A549 (cell line): ENCODE measurements at regions of chr12 and their contacts with region 1.

Region 1: GRCh38 chr12:46124848-46125619 is 134.7 kb upstream of the SCAF11 start:
- DNase-seq: peak; percentile 59 to 87
- ATAC-seq: peak; percentile 92 to 96
- H3K4me3 ChIP-seq: peak overlapping the region; percentile 7; the same call in 1 of the 3 replicates
- H3K27ac ChIP-seq: peak overlapping the region in 1 of 2 experiments; percentile 17; a peak in 3 of 6 replicates
- H3K4me1 ChIP-seq: peaks cover 14% of the 10 kb centered on the region
- CTCF ChIP-seq: peak; percentile 61
- EP300 ChIP-seq: no peak
- POLR2A ChIP-seq: no peak
- RAD21 ChIP-seq: peak; percentile 76 to 87

Region 2: GRCh38 chr12:45973526-45973925 is 151.5 kb before region 1 on chr12:
- CTCF ChIA-PET with region 1: no interaction called
- POLR2A ChIA-PET with region 1: no interaction called
- DNase-seq: no peak
- ATAC-seq: no peak
- H3K4me3 ChIP-seq: no peak overlapping the region
- H3K27ac ChIP-seq: no peak overlapping the region
- H3K4me1 ChIP-seq: peaks cover 17% of the 10 kb centered on the region
- CTCF ChIP-seq: no peak
- EP300 ChIP-seq: no peak
- POLR2A ChIP-seq: no peak
- RAD21 ChIP-seq: no peak

Region 3: GRCh38 chr12:46071769-46072624 is 53.0 kb before region 1 on chr12:
- CTCF ChIA-PET with region 1: interaction called, 10 read pairs
- POLR2A ChIA-PET with region 1: no interaction called
- DNase-seq: peak; percentile 50 to 68
- ATAC-seq: peak; percentile 90 to 98
- H3K4me3 ChIP-seq: no peak overlapping the region
- H3K27ac ChIP-seq: peak overlapping the region in 1 of 2 experiments; percentile 30; a peak in 1 of 6 replicates
- H3K4me1 ChIP-seq: 0 out of 3 replicates have a peak, but pooled peaks cover 5% of the 10 kb centered on the region
- CTCF ChIP-seq: peak; percentile 94
- EP300 ChIP-seq: no peak
- POLR2A ChIP-seq: no peak
- RAD21 ChIP-seq: peak; percentile 91 to 97

Region 4: GRCh38 chr12:46108721-46109120 is 16.3 kb before region 1 on chr12:
- CTCF ChIA-PET with region 1: interaction called, 13 read pairs
- POLR2A ChIA-PET with region 1: no interaction called
- DNase-seq: no peak
- ATAC-seq: no peak
- H3K4me3 ChIP-seq: no peak overlapping the region
- H3K27ac ChIP-seq: no peak overlapping the region
- H3K4me1 ChIP-seq: no peaks in the 10 kb centered on the region
- CTCF ChIP-seq: no peak
- EP300 ChIP-seq: no peak
- POLR2A ChIP-seq: no peak
- RAD21 ChIP-seq: no peak

Region 5: DNA sequence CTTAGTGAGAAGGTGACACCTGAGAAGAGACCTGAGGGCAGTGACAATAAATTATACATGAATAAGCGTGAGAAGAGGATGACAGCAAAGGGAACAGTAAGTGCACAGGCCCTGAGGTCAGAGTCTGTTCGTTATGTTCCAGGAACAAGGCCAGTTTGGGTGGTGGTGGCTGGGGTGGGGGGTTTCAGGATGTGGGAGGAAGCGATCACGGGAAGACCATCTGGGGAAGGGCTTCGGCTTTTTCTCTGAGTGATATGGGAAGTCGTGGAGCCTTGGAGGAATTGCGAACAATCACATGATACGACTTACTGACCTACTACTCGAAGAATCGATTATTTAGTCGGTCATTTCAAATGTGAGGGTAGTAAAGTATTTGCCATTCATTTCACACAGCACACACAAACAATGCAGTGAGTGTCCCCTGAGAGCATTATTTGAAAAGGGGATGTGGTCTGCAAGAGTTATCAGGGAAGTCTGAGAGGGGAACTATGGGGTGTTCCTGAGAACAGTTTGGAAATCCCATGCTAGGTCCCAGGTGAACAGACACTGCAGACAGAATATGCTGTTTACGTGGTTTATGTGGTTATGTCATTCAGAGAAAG is 49.1 kb after region 1 on chr12:
- CTCF ChIA-PET with region 1: no interaction called
- POLR2A ChIA-PET with region 1: no interaction called
- DNase-seq: no peak
- ATAC-seq: no peak
- H3K4me3 ChIP-seq: no peak overlapping the region
- H3K27ac ChIP-seq: no peak overlapping the region
- H3K4me1 ChIP-seq: no peaks in the 10 kb centered on the region
- CTCF ChIP-seq: no peak
- EP300 ChIP-seq: no peak
- POLR2A ChIP-seq: no peak
- RAD21 ChIP-seq: no peak

Region 6: GRCh38 chr12:46933947-46934346 is 808.9 kb after region 1 on chr12:
- CTCF ChIA-PET with region 1: interaction called, 40 read pairs
- POLR2A ChIA-PET with region 1: no interaction called
- DNase-seq: peak; percentile 22 to 58
- ATAC-seq: peak; percentile 76 to 88; a peak in 5 of 6 replicates
- H3K4me3 ChIP-seq: no peak overlapping the region
- H3K27ac ChIP-seq: no peak overlapping the region
- H3K4me1 ChIP-seq: peaks cover 9% of the 10 kb centered on the region; the same call in 2 of the 3 replicates
- CTCF ChIP-seq: peak; percentile 74
- EP300 ChIP-seq: no peak
- POLR2A ChIP-seq: no peak
- RAD21 ChIP-seq: peak; percentile 85 to 89

Region 7: DNA sequence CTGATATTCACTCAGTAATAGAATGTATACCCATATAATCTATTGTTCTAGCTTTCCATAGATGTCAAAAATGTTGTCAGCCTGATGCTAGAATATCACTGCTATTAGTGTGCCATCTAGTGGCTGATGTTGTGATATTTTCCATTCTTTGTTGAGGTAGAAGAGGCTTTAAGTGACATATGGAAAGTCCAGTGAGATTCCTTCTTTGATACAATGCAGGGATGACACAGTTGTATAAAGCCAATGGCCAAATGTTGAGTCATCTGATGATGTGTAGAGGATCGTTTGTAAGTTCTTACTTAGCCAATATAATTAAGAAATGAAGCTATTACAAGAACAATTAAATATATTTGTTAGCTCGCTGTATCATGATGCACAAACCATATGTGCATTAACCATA is 896.3 kb after region 1 on chr12:
- CTCF ChIA-PET with region 1: interaction called, 32 read pairs
- POLR2A ChIA-PET with region 1: no interaction called
- DNase-seq: peak; percentile 50 to 88
- ATAC-seq: peak; percentile 72 to 86
- H3K4me3 ChIP-seq: no peak overlapping the region
- H3K27ac ChIP-seq: no peak overlapping the region
- H3K4me1 ChIP-seq: peaks cover 43% of the 10 kb centered on the region
- CTCF ChIP-seq: peak; percentile 93
- EP300 ChIP-seq: no peak
- POLR2A ChIP-seq: no peak
- RAD21 ChIP-seq: peak; percentile 89 to 92